GM12878 (cell line): ENCODE measurements at regions of chr12 and their contacts with region 1.

Region 1: DNA sequence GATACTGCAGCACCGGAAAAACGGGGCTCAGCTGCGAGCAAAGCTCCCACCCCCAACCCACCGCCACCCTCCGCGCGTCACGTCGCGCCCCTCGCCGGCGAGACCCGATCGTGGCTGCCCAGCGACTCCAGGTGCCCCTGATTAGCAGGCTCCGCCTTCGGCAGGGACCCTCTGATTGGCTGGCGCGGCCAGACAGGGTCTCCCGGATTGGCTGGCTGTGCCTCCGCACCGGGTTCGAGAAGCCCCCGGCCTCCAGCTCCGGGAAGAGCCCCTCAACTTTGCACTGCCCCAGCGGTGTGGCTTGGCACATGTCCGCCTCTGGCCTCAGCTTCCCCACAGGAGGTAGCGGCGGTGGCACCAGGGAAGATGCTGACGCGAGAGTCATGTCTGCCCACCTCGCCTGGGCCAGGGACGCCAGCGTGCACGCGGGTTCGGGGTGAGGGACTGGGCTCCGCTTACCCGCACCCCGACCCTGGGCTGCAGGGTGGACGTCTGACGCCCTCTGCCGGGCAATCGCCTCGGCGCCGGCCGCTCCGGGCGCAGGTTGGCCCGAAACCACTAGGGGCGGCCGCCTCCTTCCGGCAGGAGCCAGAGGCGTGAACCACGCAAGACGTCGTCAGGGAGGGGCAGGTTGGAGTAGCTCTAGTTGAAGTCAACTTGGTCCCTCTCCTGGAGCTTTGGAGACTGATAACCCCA is 498 bp upstream of the RHOF start:
- DNase-seq: peak; percentile 82
- ATAC-seq: peak; percentile 71
- H3K4me3 ChIP-seq: peak overlapping the region; percentile 97
- H3K27ac ChIP-seq: peak overlapping the region; percentile 73
- H3K4me1 ChIP-seq: peaks cover 44% of the 10 kb centered on the region
- H3K27me3 ChIP-seq: no peaks in the 10 kb centered on the region
- CTCF ChIP-seq: peak; percentile 100; a peak in 5 of 6 replicates
- EP300 ChIP-seq: no peak
- POLR2A ChIP-seq: peak; percentile 73
- RAD21 ChIP-seq: peak; percentile 90

Region 2: GRCh38 chr12:121452340-121452984 is 341.5 kb before region 1 on chr12:
- CTCF ChIA-PET with region 1: no interaction called
- POLR2A ChIA-PET with region 1: no interaction called
- RAD21 ChIA-PET with region 1: no interaction called
- SMC1A ChIA-PET with region 1: no interaction called
- in situ Hi-C with region 1: no loop called
- intact Hi-C with region 1: no loop called
- DNase-seq: no peak
- ATAC-seq: peak; percentile 23
- H3K4me3 ChIP-seq: no peak overlapping the region
- H3K27ac ChIP-seq: no peak overlapping the region
- H3K4me1 ChIP-seq: peaks cover 10% of the 10 kb centered on the region
- H3K27me3 ChIP-seq: no peaks in the 10 kb centered on the region
- CTCF ChIP-seq: no peak
- EP300 ChIP-seq: no peak
- POLR2A ChIP-seq: no peak
- RAD21 ChIP-seq: no peak

Region 3: DNA sequence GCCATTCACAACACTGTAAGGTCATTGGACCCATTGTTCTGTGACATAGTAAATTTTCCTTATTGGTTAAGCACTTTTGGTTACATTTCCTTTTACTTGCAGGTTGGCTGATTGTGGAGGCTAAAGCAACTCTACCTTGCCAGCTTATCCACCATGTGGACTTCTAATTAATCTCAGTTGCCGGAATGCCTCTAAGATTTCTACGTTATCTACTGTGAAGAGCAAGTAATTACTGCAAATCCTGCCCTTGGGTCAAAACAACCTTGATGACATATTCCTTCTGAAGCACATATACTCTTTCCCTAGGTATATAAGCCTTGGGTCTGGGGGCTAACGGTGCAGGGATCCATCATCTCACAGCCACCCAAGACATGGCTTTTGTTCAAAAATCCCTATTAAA is 105.0 kb before region 1 on chr12:
- CTCF ChIA-PET with region 1: interaction called, 128 read pairs
- POLR2A ChIA-PET with region 1: interaction called, 3 read pairs
- RAD21 ChIA-PET with region 1: interaction called, 20 read pairs
- SMC1A ChIA-PET with region 1: interaction called, 15 read pairs
- in situ Hi-C with region 1: loop called (anchors 5 kb)
- intact Hi-C with region 1: no loop called
- DNase-seq: no peak
- ATAC-seq: no peak
- H3K4me3 ChIP-seq: no peak overlapping the region
- H3K27ac ChIP-seq: no peak overlapping the region
- H3K4me1 ChIP-seq: no peaks in the 10 kb centered on the region; the same call in 1 of the 2 replicates
- H3K27me3 ChIP-seq: no peaks in the 10 kb centered on the region
- CTCF ChIP-seq: no peak
- EP300 ChIP-seq: no peak
- POLR2A ChIP-seq: no peak
- RAD21 ChIP-seq: no peak

Region 4: DNA sequence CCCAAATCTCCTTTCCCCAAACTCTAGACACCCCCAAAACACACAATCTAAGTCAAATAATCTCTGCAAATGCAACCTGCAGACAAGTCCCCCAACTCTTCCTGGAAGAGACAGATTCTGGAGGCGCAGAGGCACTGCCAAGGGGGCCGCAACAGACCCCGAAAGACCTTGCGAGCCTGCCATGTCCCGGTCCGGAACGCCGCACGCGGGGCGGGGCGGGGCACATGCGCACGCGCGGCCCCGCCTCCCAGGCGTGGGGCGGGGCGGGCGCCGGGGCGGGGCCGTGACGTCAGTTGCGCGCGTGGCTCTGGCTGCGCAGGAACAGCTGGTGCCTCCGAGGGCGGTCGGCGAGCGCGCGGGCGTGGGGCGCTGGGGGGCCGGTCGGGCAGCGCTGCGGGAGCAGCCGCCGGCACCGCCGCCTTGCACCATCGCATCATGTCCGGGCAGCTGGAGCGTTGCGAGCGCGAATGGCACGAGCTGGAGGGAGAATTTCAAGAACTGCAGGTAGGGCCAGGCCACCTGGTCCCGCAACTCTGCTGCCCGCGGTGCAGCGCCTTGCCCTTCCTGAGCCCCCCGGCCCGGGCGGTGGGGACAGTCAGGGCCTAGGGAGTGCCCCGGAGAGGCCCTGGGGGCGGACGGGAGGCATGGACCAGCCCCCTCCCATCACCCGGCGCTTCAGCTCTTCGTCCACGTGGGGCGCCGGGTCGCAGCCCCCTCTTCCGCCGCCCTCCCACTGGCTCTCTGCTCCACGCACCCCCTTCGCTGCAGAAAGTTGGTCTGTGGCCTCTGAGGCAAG is 81.3 kb before region 1 on chr12 and contains the start of gene TMEM120B:
- CTCF ChIA-PET with region 1: interaction called, 23 read pairs
- POLR2A ChIA-PET with region 1: interaction called, 7 read pairs
- RAD21 ChIA-PET with region 1: interaction called, 32 read pairs
- SMC1A ChIA-PET with region 1: interaction called, 14 read pairs
- in situ Hi-C with region 1: no loop called
- intact Hi-C with region 1: no loop called
- DNase-seq: no peak
- ATAC-seq: peak; percentile 86
- H3K4me3 ChIP-seq: peak within 1 kb of the TSS; percentile 85
- H3K27ac ChIP-seq: peak within 1 kb of the TSS; percentile 32
- H3K4me1 ChIP-seq: peaks cover 16% of the 10 kb centered on the region; the same call in 1 of the 2 replicates
- H3K27me3 ChIP-seq: no peaks in the 10 kb centered on the region
- CTCF ChIP-seq: peak in 2 of 3 experiments; percentile 19 to 31; a peak in 2 of 6 replicates
- EP300 ChIP-seq: no peak
- POLR2A ChIP-seq: peak; percentile 88
- RAD21 ChIP-seq: no peak
- polyA plus RNA-seq, gene TMEM120B: 11.3 to 26.2 TPM

Region 5: GRCh38 chr12:121765573-121765972 is 28.4 kb before region 1 on chr12:
- CTCF ChIA-PET with region 1: interaction called, 15 read pairs
- POLR2A ChIA-PET with region 1: interaction called, 4 read pairs
- RAD21 ChIA-PET with region 1: interaction called, 7 read pairs
- SMC1A ChIA-PET with region 1: interaction called, 3 read pairs
- in situ Hi-C with region 1: no loop called
- intact Hi-C with region 1: no loop called
- DNase-seq: no peak
- ATAC-seq: no peak
- H3K4me3 ChIP-seq: no peak overlapping the region
- H3K27ac ChIP-seq: no peak overlapping the region
- H3K4me1 ChIP-seq: no peaks in the 10 kb centered on the region
- H3K27me3 ChIP-seq: no peaks in the 10 kb centered on the region
- CTCF ChIP-seq: no peak
- EP300 ChIP-seq: no peak
- POLR2A ChIP-seq: no peak
- RAD21 ChIP-seq: no peak

Region 6: DNA sequence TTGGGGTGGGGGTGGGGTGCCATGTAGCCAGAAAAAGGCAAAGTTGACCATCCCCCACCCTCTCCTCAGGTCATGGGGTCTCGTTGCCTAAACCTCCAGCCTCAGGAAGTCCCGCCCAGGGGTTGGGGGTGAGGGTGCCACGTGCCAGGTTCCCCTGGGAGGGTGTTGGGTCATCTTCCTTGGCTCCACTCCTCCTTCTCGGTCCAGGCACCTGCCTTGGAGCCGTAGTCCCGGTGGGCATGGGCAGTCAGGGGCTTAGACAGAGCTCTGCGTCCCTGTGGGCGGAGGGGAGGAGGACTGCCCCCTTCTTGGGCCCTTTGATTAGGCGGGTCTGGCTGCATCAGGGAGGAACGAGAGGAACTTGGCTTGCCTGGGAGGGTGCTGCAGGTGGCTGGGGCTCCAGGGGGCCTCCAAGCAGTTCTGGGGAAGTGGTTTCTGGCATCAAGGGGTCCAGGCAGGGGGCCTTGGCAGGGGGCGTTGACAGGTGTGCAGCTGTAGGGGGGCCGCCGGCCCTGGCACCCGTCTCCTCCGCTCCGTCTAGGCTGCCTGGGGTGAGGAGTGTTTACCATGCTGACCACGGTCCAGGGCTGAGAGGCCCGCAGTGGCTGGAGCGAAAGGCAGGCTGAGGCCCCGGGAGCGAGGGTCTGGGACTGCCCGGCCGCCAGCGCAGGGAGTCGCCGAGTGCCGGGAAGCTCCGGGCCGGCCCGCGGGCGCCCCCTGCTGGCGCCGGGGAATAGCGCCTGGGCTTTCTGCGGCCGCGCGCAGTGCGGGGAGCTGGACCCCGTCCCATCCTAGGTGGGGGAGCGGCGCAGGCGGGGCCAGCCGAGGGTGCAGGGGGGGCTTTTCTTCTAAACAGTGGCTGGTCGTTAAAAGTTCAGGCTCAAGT is 17.7 kb after region 1 on chr12:
- CTCF ChIA-PET with region 1: interaction called, 565 read pairs
- POLR2A ChIA-PET with region 1: interaction called, 155 read pairs
- RAD21 ChIA-PET with region 1: interaction called, 395 read pairs
- SMC1A ChIA-PET with region 1: interaction called, 226 read pairs
- in situ Hi-C with region 1: no loop called
- intact Hi-C with region 1: loop called (anchors 1 kb)
- DNase-seq: no peak
- ATAC-seq: peak; percentile 96
- H3K4me3 ChIP-seq: peak overlapping the region; percentile 82
- H3K27ac ChIP-seq: peak overlapping the region; percentile 59; the same call in 1 of the 2 replicates
- H3K4me1 ChIP-seq: peaks cover 16% of the 10 kb centered on the region
- H3K27me3 ChIP-seq: no peaks in the 10 kb centered on the region
- CTCF ChIP-seq: peak; percentile 76 to 92 (median 88); a peak in 5 of 6 replicates
- EP300 ChIP-seq: no peak
- POLR2A ChIP-seq: no peak; the same call in 1 of the 2 replicates
- RAD21 ChIP-seq: peak; percentile 82

Region 7: DNA sequence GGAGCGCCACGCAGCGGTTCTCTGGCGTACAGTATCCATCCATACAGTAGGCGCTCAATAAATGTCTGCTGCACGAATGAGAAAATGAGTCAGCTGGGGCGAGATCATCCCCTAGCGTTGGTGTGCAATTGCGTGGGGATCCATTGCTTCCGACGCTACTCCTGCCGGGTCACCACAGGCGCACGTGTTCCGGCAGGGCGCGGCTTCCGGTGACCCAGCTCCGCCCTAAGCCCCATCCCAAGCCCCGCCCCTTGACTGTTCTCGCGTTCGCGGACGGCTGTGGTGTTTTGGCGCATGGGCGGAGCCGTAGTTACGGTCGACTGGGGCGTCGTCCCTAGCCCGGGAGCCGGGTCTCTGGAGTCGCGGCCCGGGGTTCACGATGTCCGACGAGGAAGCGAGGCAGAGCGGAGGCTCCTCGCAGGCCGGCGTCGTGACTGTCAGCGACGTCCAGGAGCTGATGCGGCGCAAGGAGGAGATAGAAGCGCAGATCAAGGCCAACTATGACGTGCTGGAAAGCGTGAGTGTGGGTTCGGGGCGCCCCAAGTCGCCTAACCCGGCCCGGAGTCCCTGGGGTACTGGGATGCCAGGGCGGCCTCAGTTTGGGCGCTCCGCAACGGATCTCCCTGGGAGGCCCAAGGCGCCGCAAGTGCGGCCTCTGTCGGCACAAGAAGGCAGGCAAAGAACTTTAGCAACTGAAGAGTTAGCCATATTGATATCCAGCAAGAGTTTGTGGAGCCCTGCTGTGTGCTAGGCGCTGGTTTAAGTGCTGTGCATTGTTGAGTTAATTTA is 94.7 kb after region 1 on chr12 and contains the start of gene PSMD9:
- CTCF ChIA-PET with region 1: interaction called, 90 read pairs
- POLR2A ChIA-PET with region 1: interaction called, 10 read pairs
- RAD21 ChIA-PET with region 1: interaction called, 54 read pairs
- SMC1A ChIA-PET with region 1: interaction called, 36 read pairs
- in situ Hi-C with region 1: loop called (anchors 5 kb)
- intact Hi-C with region 1: loop called (anchors 1 kb)
- DNase-seq: peak; percentile 90
- ATAC-seq: peak; percentile 98
- H3K4me3 ChIP-seq: peak within 1 kb of the TSS; percentile 89
- H3K27ac ChIP-seq: peak within 1 kb of the TSS; percentile 84
- H3K4me1 ChIP-seq: peaks cover 5% of the 10 kb centered on the region; the same call in 1 of the 2 replicates
- H3K27me3 ChIP-seq: no peaks in the 10 kb centered on the region
- CTCF ChIP-seq: peak; percentile 68 to 73 (median 69)
- EP300 ChIP-seq: 0 out of 4 replicates have a peak, but pooled peaks of 1 of the 2 experiments have one; percentile 17
- POLR2A ChIP-seq: peak; percentile 98
- RAD21 ChIP-seq: peak; percentile 64
- polyA plus RNA-seq, gene PSMD9: 14.6 to 33.7 TPM

Region 8: DNA sequence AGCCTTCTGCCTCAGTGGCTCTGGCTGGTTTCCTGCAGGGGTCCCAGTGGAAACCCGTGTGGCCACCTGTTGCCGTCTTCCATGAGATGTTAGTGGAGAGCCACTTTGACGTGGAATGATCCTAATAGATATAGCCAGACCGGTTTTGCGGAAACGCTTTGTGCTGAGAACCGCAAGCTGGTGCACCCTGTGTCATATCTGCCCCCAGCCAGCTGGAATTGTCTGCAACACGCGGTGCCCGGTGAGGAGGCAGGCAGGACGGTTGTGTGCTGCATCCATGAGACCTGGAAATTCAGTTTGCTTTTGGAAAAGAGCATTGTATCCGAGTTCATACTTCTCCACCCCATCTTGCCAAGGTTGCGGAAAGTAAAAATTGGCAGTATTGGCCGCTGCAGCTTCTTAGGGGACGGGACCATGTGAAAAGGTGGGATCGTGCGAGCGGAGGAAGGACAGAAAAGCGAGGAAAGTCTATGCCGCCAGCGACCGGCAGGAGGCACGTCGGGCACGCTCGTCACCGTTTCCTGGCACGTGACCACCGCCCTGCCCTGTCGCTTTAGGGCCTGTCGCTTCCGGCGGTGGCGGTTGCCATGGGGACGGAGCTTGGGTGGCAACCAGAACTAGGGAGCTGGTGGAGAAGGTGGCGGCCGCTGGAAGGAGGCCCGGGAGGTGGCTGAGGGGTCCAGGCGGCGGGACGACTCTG is 124.1 kb after region 1 on chr12 and contains the start of gene CFAP251:
- CTCF ChIA-PET with region 1: interaction called, 11 read pairs
- POLR2A ChIA-PET with region 1: no interaction called
- RAD21 ChIA-PET with region 1: interaction called, 4 read pairs
- SMC1A ChIA-PET with region 1: interaction called, 3 read pairs
- in situ Hi-C with region 1: no loop called
- intact Hi-C with region 1: no loop called
- DNase-seq: peak; percentile 50
- ATAC-seq: peak; percentile 100
- H3K4me3 ChIP-seq: peak within 1 kb of the TSS; percentile 57
- H3K27ac ChIP-seq: peak within 1 kb of the TSS; percentile 13; the same call in 1 of the 2 replicates
- H3K4me1 ChIP-seq: peaks cover 8% of the 10 kb centered on the region; the same call in 1 of the 2 replicates
- H3K27me3 ChIP-seq: no peaks in the 10 kb centered on the region
- CTCF ChIP-seq: peak; percentile 60 to 79 (median 73)
- EP300 ChIP-seq: no peak; a peak in 1 of 4 replicates
- POLR2A ChIP-seq: peak; percentile 67
- RAD21 ChIP-seq: peak; percentile 48
- polyA plus RNA-seq, gene CFAP251: 0.27 to 0.42 TPM

Region 9: GRCh38 chr12:121949648-121950397 is 155.8 kb after region 1 on chr12:
- CTCF ChIA-PET with region 1: no interaction called
- POLR2A ChIA-PET with region 1: no interaction called
- RAD21 ChIA-PET with region 1: no interaction called
- SMC1A ChIA-PET with region 1: no interaction called
- in situ Hi-C with region 1: no loop called
- intact Hi-C with region 1: no loop called
- DNase-seq: no peak
- ATAC-seq: no peak
- H3K4me3 ChIP-seq: no peak overlapping the region
- H3K27ac ChIP-seq: no peak overlapping the region
- H3K4me1 ChIP-seq: no peaks in the 10 kb centered on the region
- H3K27me3 ChIP-seq: no peaks in the 10 kb centered on the region
- CTCF ChIP-seq: no peak
- EP300 ChIP-seq: no peak
- POLR2A ChIP-seq: no peak
- RAD21 ChIP-seq: no peak

Region 10: GRCh38 chr12:122406701-122407164 is 612.7 kb after region 1 on chr12:
- CTCF ChIA-PET with region 1: no interaction called
- POLR2A ChIA-PET with region 1: no interaction called
- RAD21 ChIA-PET with region 1: no interaction called
- SMC1A ChIA-PET with region 1: no interaction called
- in situ Hi-C with region 1: no loop called
- intact Hi-C with region 1: no loop called
- DNase-seq: no peak
- ATAC-seq: no peak
- H3K4me3 ChIP-seq: no peak overlapping the region
- H3K27ac ChIP-seq: peak overlapping the region; percentile 31; the same call in 1 of the 2 replicates
- H3K4me1 ChIP-seq: peaks cover 25% of the 10 kb centered on the region
- H3K27me3 ChIP-seq: no peaks in the 10 kb centered on the region
- CTCF ChIP-seq: no peak
- EP300 ChIP-seq: no peak
- POLR2A ChIP-seq: no peak
- RAD21 ChIP-seq: no peak